ENCODE measurements at regions of chr1 and their contacts with region 1.

Region 1: GRCh38 chr1:10530281-10530740 is 55.6 kb downstream of the PEX14 start:
- DNase-seq: peak in 1 of 2 donors; percentile 40
- ATAC-seq: peak; percentile 43 to 68 (median 54)
- H3K4me3 ChIP-seq: peak overlapping the region in 1 of 10 donors; percentile 4
- H3K27ac ChIP-seq: peak overlapping the region in 2 of 10 donors; percentile 3 to 77
- H3K4me1 ChIP-seq: peaks cover 18 to 54% (median 33%) of the 10 kb centered on the region in 9 donors
- H3K27me3 ChIP-seq: no peaks in the 10 kb centered on the region
- CTCF ChIP-seq: peak; percentile 52 to 81 (median 67)

Region 2: DNA sequence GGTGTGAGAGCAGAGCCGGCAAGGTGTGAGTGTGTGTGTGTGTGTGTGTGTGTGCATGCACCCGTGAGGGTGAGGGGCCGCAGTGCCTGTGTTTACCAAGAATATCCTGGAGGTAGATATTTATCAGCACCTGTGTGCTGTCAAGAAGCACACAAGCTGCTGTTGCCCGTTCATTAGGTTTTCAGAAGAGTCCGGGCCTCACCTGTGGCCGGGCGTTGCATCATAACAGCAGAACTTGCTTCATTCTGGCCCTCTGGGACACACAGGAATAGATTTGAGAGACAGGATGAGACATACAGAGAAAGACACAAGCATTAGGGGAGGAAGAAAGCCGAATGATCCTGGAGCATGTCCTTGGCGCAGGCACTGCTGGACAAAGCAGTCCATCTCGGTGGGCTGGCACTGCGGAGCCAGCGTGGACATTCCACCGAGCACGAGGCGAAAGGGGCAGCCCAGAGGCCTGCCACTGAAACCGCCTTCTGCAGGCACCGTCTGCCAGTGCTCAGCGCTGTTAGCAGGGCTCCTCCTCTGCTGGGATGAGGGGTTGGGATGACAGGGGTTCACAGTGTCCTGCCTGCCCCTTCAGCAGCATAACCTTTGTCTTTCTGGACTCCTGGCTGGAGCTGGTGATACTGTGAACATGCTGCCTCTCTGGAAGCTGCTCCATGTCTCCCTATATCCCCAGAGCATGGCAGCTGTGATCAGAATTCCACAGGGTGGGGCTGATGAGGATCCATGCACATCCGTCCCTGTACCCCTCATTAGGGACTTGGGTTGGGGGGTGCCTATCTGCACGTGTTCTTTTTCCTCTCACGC is 25.5 kb after region 1 on chr1:
- intact Hi-C with region 1: no loop called
- DNase-seq: no peak
- ATAC-seq: peak in 7 of 8 donors; percentile 42 to 84 (median 69)
- H3K4me3 ChIP-seq: no peak overlapping the region
- H3K27ac ChIP-seq: peak overlapping the region in 4 of 10 donors; percentile 12 to 55 (median 43)
- H3K4me1 ChIP-seq: peaks cover 0 to 14% (median 9%) of the 10 kb centered on the region in 9 donors
- H3K27me3 ChIP-seq: no peaks in the 10 kb centered on the region
- CTCF ChIP-seq: no peak

Region 3: GRCh38 chr1:10575616-10576015 is 45.3 kb after region 1 on chr1:
- intact Hi-C with region 1: no loop called
- DNase-seq: no peak
- ATAC-seq: no peak
- H3K4me3 ChIP-seq: no peak overlapping the region
- H3K27ac ChIP-seq: no peak overlapping the region
- H3K4me1 ChIP-seq: no peaks in the 10 kb centered on the region
- H3K27me3 ChIP-seq: no peaks in the 10 kb centered on the region
- CTCF ChIP-seq: no peak

Region 4: DNA sequence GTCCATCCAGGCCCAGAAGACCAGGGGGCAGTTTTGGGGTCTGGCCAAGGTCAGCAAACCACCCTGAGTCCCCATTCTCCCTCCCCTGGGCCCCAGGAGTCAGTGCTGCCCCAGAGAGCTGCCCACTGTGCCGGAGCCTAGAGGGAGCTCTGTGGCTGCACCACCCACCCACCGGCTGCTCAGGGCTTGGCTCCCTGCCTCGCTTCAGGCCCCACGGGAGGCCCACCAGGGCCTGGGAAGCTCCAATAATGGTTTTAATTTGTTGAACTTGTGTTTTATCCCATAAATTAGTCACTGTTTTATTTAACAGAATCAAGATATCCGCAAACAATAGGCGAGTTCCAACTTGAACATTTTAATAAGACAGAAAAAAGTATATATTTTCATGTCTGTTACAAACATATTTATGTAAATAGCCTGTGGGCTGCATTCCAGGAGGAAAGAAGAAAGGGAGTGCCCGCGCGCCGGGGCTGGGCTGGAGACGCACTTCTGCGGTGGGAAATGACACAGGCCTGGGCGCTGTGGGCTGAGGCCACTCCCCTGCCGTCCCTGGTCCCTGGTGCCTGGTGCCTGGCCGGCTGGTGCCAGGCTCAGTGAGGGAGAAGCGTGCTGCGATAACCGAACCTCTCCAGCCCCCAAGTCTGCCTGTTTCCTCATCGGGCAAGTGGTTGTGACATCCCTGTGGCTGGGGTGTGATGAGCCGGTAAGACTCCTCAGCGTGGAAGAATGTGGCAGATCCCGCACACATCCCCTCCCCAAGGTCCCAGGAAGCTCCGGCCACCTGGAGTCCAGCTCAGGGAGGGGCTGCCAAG is 105.0 kb after region 1 on chr1:
- intact Hi-C with region 1: loop called in 1 of 10 experiments (anchors 10 kb)
- DNase-seq: peak in 1 of 2 donors; percentile 57
- ATAC-seq: peak in 6 of 8 donors; percentile 21 to 61 (median 48)
- H3K4me3 ChIP-seq: no peak overlapping the region
- H3K27ac ChIP-seq: peak overlapping the region; percentile 36 to 71 (median 44)
- H3K4me1 ChIP-seq: peaks cover 7 to 32% (median 20%) of the 10 kb centered on the region in 9 donors
- H3K27me3 ChIP-seq: peaks cover 0 to 26% (median 0%) of the 10 kb centered on the region in 7 donors
- CTCF ChIP-seq: peak in 2 of 9 donors; percentile 14 to 30

Region 5: GRCh38 chr1:10679496-10680220 is 149.3 kb after region 1 on chr1:
- intact Hi-C with region 1: loop called in 2 of 10 experiments (anchors 5 kb)
- DNase-seq: peak in 1 of 2 donors; percentile 61
- ATAC-seq: peak in 6 of 8 donors; percentile 0 to 40 (median 22)
- H3K4me3 ChIP-seq: no peak overlapping the region
- H3K27ac ChIP-seq: peak overlapping the region in 7 of 10 donors; percentile 38 to 92 (median 52)
- H3K4me1 ChIP-seq: peaks cover 30 to 100% (median 90%) of the 10 kb centered on the region in 9 donors
- H3K27me3 ChIP-seq: no peaks in the 10 kb centered on the region
- CTCF ChIP-seq: no peak

Region 6: DNA sequence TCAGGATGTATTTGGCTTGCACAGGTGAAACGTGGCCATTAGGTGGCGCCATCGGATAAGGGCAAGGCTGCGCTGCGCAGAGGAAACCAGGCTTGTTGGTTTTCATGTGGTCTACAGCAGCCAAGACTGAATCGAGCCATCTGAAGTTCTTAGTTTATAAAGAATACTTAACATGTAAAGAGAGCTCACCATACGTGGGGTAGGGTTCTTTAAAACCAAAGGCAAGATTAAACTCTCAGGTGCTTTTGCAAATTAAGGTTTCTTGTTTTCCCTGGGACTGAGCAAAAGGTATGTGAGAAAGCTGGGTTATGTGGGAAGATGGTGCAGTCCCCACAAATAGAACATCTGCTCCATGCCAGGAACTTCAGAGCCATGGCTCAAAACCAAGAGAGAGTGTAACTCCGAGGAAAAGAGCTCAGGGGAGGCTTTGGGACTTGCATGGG is 507.4 kb after region 1 on chr1:
- intact Hi-C with region 1: no loop called
- DNase-seq: peak; percentile 82 to 88
- ATAC-seq: peak; percentile 86 to 97 (median 94)
- H3K4me3 ChIP-seq: no peak overlapping the region
- H3K27ac ChIP-seq: no peak overlapping the region
- H3K4me1 ChIP-seq: peaks cover 0 to 13% (median 3%) of the 10 kb centered on the region in 9 donors
- H3K27me3 ChIP-seq: no peaks in the 10 kb centered on the region
- CTCF ChIP-seq: peak; percentile 89 to 99 (median 97)

Measured in heart right ventricle (tissue), 16 donors.